OCI-LY7 (cell line): ENCODE measurements at regions of chr5 and their contacts with region 1.

Region 1: DNA sequence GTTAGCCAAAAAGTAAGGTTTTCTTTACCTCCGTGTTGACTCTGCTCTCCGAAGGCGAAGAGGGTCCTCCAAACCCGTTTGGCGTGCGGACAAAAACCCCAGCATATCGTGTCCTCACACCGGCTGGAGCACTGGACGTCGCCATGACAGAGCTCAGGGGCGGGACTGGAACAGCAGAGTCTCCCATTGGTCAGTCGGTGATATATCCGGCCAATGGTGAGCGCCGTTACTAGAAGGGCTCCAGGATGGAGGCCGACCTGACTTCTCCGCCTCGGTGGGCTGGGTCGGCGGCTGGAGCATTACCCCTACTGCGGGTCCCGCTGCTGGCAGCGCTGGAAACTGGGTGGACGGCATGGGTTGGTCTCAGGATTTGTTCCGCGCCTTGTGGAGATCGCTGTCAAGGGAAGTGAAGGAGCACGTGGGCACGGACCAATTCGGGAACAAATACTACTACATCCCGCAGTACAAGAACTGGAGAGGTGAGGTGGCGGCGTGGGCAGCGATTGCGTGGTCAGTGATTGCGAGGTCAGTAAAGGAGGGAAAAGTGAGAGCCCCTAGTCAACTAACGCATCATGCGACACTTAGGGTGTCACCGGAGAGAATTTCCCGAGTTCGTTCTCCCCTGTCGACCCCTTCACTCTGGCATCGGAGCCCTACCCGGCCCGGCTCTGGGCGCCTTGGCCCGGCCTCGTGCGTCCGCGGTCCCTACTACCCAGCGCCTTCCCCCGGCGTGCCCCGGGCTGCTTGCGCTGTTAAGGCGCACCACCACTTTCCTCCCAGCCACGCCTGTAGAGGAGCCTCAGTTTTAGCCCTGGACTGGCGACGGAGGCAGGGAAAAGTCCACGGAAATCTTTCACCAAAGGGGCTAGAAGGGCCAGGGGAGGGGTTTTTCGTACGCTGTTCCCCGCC is at the starts of genes ERCC8 and NDUFAF2:
- DNase-seq: peak; percentile 91
- H3K4me3 ChIP-seq: peak within 1 kb of the TSS; percentile 80
- H3K27ac ChIP-seq: peak within 1 kb of the TSS; percentile 1
- H3K4me1 ChIP-seq: peaks cover 13% of the 10 kb centered on the region
- CTCF ChIP-seq: no peak
- total RNA-seq, gene ERCC8: 11.8 and 14.0 TPM in 2 replicates
- total RNA-seq, gene NDUFAF2: 20.8 and 34.8 TPM in 2 replicates

Region 2: DNA sequence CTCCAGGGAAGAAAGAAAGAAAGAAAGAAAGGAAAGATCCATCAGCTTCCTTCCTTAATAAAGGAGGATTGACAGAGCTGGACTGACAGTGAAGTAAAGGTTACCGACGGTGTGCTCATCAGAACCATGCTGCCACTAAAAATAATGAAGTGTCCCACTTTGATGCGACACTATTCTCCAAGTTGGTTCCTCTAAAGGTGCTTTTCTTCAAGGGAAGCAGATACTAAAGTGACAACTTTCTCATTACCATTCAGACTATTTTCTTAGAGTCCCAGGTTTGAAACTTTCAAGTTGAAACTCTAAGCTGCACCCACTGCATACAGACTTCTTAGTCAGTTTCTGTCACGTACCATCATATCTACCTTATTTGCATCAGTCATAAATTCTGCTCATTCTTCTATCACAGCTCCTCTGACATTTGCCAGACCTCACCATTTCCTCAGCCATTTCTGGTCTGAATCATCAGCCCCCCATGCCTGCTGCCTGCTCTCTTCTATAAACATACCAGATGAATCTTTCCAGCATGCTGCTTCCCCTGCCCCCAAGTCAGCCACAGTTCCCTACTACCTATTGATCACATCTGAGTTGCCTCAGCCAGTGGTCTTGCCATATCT is 422.8 kb before region 1 on chr5:
- CTCF ChIA-PET with region 1: no interaction called
- POLR2A ChIA-PET with region 1: no interaction called
- intact Hi-C with region 1: loop called (anchors 10 kb)
- DNase-seq: peak; percentile 28
- H3K4me3 ChIP-seq: peak overlapping the region; percentile 63
- H3K27ac ChIP-seq: peak overlapping the region; percentile 49
- H3K4me1 ChIP-seq: peaks cover 33% of the 10 kb centered on the region
- CTCF ChIP-seq: no peak

Region 3: GRCh38 chr5:60677844-60678664 is 267.1 kb before region 1 on chr5:
- CTCF ChIA-PET with region 1: no interaction called
- POLR2A ChIA-PET with region 1: interaction called, 3 read pairs
- intact Hi-C with region 1: loop called (anchors 5 kb)
- DNase-seq: peak; percentile 33
- H3K4me3 ChIP-seq: no peak overlapping the region
- H3K27ac ChIP-seq: no peak overlapping the region
- H3K4me1 ChIP-seq: no peaks in the 10 kb centered on the region
- CTCF ChIP-seq: peak; percentile 81

Region 4: DNA sequence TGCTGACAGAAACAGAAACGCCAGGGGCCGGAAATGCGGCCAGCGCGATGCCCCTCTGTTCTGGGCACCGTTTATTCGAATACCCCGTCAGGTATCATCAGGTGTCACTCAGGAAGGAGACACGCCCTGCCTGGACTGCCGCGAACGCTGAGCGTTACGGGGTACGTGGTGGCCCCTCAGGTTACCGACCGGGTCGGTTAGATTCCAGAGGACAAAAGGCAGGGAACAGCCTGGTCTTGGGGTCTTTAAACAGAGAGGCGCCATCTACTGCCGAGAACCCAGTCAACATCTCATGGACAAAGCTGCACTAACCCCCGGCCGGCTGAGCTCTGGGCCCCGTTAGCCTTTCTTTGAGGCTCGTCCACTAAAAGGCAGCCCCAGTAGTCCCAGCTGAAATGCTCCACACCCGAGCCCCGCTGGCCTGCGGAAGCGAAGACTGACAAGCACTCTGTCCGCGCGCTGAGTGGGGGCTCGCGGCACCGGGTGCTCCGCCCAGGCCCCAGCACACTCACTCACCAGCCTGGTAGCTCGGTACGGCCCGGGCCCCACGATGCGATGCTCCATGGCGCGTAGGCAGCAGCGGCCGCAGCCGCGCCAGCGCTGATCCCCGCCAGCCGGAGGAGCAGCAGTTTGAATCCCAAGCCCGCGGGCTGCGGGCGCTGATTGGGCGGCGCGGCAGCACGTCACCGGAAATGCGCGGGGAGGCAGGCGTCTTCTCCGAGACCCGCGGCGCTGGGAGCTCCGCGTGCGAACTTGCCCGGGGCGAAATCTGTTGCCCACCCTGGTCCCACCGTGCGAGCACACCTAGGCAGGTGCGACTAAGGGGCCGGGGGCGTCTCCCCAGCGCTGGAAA is 245.4 kb before region 1 on chr5 and contains the start of gene DEPDC1B:
- CTCF ChIA-PET with region 1: no interaction called
- POLR2A ChIA-PET with region 1: interaction called, 4 read pairs
- intact Hi-C with region 1: loop called (anchors 5 kb)
- DNase-seq: peak; percentile 92
- H3K4me3 ChIP-seq: peak within 1 kb of the TSS; percentile 90
- H3K27ac ChIP-seq: peak within 1 kb of the TSS; percentile 83
- H3K4me1 ChIP-seq: peaks cover 26% of the 10 kb centered on the region
- CTCF ChIP-seq: peak; percentile 72
- total RNA-seq, gene DEPDC1B: 43.7 and 46.9 TPM in 2 replicates

Region 5: GRCh38 chr5:61162010-61162831 is 217.1 kb after region 1 on chr5 and contains the start of gene SMIM15:
- CTCF ChIA-PET with region 1: no interaction called
- POLR2A ChIA-PET with region 1: interaction called, 3 read pairs
- intact Hi-C with region 1: loop called (anchors 5 kb)
- DNase-seq: peak; percentile 90
- H3K4me3 ChIP-seq: peak within 1 kb of the TSS; percentile 91
- H3K27ac ChIP-seq: peak within 1 kb of the TSS; percentile 49
- H3K4me1 ChIP-seq: peaks cover 21% of the 10 kb centered on the region
- CTCF ChIP-seq: no peak
- total RNA-seq, gene SMIM15: 39.4 and 45.7 TPM in 2 replicates

Region 6: DNA sequence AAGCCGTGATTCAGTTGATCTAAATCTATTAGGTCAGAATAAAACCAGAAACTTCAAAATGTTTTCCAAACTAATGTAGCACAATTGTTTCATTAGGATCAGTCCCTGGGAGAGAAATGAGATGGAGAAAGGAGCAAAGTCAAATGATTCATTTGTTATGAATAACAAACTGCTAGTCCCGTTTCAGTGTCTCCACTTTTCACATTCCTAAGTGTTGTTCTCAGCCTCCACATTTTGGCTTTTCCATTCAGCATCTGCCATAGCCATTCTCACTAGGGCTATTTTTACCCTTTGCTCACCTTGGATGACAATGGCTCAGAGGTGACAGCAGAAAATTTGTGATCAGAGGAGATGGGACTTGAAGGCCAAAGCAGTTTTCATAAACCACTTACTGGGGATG is 1046.7 kb after region 1 on chr5:
- CTCF ChIA-PET with region 1: no interaction called
- POLR2A ChIA-PET with region 1: no interaction called
- intact Hi-C with region 1: no loop called
- DNase-seq: no peak
- H3K4me3 ChIP-seq: no peak overlapping the region
- H3K27ac ChIP-seq: no peak overlapping the region
- H3K4me1 ChIP-seq: no peaks in the 10 kb centered on the region
- CTCF ChIP-seq: no peak

Region 7: GRCh38 chr5:62138607-62139006 is 1193.4 kb after region 1 on chr5:
- CTCF ChIA-PET with region 1: no interaction called
- POLR2A ChIA-PET with region 1: no interaction called
- intact Hi-C with region 1: no loop called
- DNase-seq: no peak
- H3K4me3 ChIP-seq: no peak overlapping the region
- H3K27ac ChIP-seq: no peak overlapping the region
- H3K4me1 ChIP-seq: no peaks in the 10 kb centered on the region
- CTCF ChIP-seq: no peak